Breast epithelium (tissue), 4 donors: ENCODE measurements at regions of chr10 and their contacts with region 1.

Region 1: DNA sequence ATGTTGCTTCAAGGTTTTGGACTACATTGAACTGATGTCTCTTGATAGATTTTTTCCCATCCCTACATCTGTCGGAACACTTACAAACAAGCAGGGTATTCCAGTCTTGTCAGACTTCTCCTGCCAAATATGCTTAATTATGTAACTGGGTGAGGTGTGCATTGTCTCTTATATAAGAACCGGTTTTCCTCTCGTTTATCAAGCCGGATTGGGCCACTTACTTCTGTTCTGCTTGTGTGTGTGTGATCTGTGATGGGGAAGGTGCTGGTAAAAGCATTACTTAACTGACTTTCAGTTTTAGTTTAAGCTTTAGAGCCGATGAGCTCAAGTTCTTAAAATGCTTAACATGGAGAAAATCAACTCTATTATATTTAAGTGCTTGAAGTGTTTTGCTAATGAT is 57.9 kb downstream of the OTUD1 start:
- DNase-seq: no peak
- H3K4me3 ChIP-seq: no peak overlapping the region
- H3K27ac ChIP-seq: no peak overlapping the region
- H3K4me1 ChIP-seq: no peaks in the 10 kb centered on the region
- H3K27me3 ChIP-seq: no peaks in the 10 kb centered on the region
- CTCF ChIP-seq: no peak
- POLR2A ChIP-seq: no peak

Region 2: GRCh38 chr10:23472181-23472580 is 24.5 kb before region 1 on chr10:
- intact Hi-C with region 1: loop called (anchors 1 kb)
- DNase-seq: no peak
- H3K4me3 ChIP-seq: no peak overlapping the region
- H3K27ac ChIP-seq: no peak overlapping the region
- H3K4me1 ChIP-seq: no peaks in the 10 kb centered on the region
- H3K27me3 ChIP-seq: no peaks in the 10 kb centered on the region
- CTCF ChIP-seq: no peak
- POLR2A ChIP-seq: no peak

Region 3: GRCh38 chr10:23525406-23525805 is 28.7 kb after region 1 on chr10:
- intact Hi-C with region 1: no loop called
- DNase-seq: no peak
- H3K4me3 ChIP-seq: no peak overlapping the region
- H3K27ac ChIP-seq: no peak overlapping the region
- H3K4me1 ChIP-seq: no peaks in the 10 kb centered on the region
- H3K27me3 ChIP-seq: no peaks in the 10 kb centered on the region
- CTCF ChIP-seq: peak in 2 of 3 donors; percentile 21 to 44
- POLR2A ChIP-seq: no peak